A673 (cell line): ENCODE measurements at regions of chr7 and their contacts with region 1.

Region 1: GRCh38 chr7:110442381-110442837 is 648.5 kb upstream of the LRRN3 start:
- DNase-seq: peak; percentile 56
- H3K4me3 ChIP-seq: no peak overlapping the region
- H3K27ac ChIP-seq: no peak overlapping the region
- H3K4me1 ChIP-seq: no peaks in the 10 kb centered on the region
- H3K27me3 ChIP-seq: no peaks in the 10 kb centered on the region
- CTCF ChIP-seq: peak; percentile 70

Region 2: DNA sequence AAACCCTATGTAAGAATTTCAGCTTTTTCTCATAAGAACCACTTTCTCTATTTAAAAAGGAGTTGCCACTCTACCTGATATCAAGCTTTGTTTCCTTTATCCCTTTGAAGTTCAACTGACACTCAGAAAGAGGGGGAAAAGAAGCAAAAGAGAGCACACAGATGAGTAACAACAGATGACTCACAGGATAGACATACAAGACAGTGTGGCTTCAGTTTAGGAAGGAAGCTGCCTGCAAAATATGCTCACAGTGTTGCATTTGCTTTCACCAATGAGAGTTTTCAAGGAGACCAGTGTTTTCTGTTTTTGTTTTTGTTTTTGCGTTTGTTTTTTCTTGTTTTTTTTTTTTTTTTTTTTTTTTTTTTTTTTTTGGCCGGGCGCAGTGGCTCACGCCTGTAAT is 691.2 kb before region 1 on chr7:
- CTCF ChIA-PET with region 1: no interaction called
- POLR2A ChIA-PET with region 1: no interaction called
- intact Hi-C with region 1: no loop called
- DNase-seq: no peak
- H3K4me3 ChIP-seq: no peak overlapping the region
- H3K27ac ChIP-seq: no peak overlapping the region
- H3K4me1 ChIP-seq: no peaks in the 10 kb centered on the region
- H3K27me3 ChIP-seq: no peaks in the 10 kb centered on the region
- CTCF ChIP-seq: no peak

Region 3: DNA sequence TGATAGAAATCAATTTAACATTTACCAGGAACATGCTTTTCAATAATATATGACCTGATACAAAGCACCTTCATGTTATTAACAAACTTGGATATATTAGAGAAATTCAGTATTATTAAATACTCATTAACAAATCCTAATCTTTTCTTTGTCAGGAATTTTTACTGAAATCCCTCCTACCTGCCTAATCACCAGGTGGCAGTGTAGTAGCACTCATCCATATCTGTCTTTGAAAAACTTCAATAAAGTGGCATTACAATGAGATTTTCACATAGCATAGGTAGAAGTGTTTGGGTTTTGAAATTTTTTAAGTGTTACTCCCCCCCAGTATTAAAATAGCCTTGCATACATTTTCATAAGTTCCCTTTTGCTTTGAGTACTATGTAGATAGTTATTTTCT is 598.0 kb before region 1 on chr7:
- CTCF ChIA-PET with region 1: no interaction called
- POLR2A ChIA-PET with region 1: no interaction called
- intact Hi-C with region 1: loop called (anchors 10 kb)
- DNase-seq: peak; percentile 2
- H3K4me3 ChIP-seq: no peak overlapping the region
- H3K27ac ChIP-seq: no peak overlapping the region
- H3K4me1 ChIP-seq: no peaks in the 10 kb centered on the region
- H3K27me3 ChIP-seq: no peaks in the 10 kb centered on the region
- CTCF ChIP-seq: peak; percentile 46; the same call in 1 of the 2 replicates

Region 4: GRCh38 chr7:110938165-110938564 is 495.8 kb after region 1 on chr7:
- CTCF ChIA-PET with region 1: no interaction called
- POLR2A ChIA-PET with region 1: no interaction called
- intact Hi-C with region 1: no loop called
- DNase-seq: no peak
- H3K4me3 ChIP-seq: no peak overlapping the region
- H3K27ac ChIP-seq: no peak overlapping the region
- H3K4me1 ChIP-seq: no peaks in the 10 kb centered on the region
- H3K27me3 ChIP-seq: no peaks in the 10 kb centered on the region
- CTCF ChIP-seq: no peak